Natural killer cell (primary cell): ENCODE measurements at regions of chr13 and their contacts with region 1.

Region 1: GRCh38 chr13:113879494-113880360 is 15.9 kb upstream of the GAS6 start:
- DNase-seq: no peak
- ATAC-seq: no peak
- H3K4me3 ChIP-seq: no peak overlapping the region
- H3K4me3 Mint-ChIP-seq: peak overlapping the region; percentile 19
- H3K27ac ChIP-seq: no peak overlapping the region
- H3K27ac Mint-ChIP-seq: no peak overlapping the region
- H3K4me1 ChIP-seq: peaks cover 46% of the 10 kb centered on the region
- H3K4me1 Mint-ChIP-seq: peaks cover 21 to 51% of the 10 kb centered on the region in 2 donors
- H3K27me3 ChIP-seq: no peaks in the 10 kb centered on the region
- H3K27me3 Mint-ChIP-seq: peaks cover 0 to under 1% of the 10 kb centered on the region in 2 donors
- CTCF ChIP-seq: no peak

Region 2: GRCh38 chr13:114259974-114260373 is 380.2 kb after region 1 on chr13:
- intact Hi-C with region 1: loop called (anchors 2 kb)
- DNase-seq: no peak
- ATAC-seq: no peak
- H3K4me3 ChIP-seq: no peak overlapping the region
- H3K4me3 Mint-ChIP-seq: no peak overlapping the region
- H3K27ac ChIP-seq: no peak overlapping the region
- H3K27ac Mint-ChIP-seq: peak overlapping the region in 1 of 2 donors; percentile 37
- H3K4me1 ChIP-seq: peaks cover 43% of the 10 kb centered on the region
- H3K4me1 Mint-ChIP-seq: peaks cover 54 to 63% of the 10 kb centered on the region in 2 donors
- H3K27me3 ChIP-seq: no peaks in the 10 kb centered on the region
- H3K27me3 Mint-ChIP-seq: no peaks in the 10 kb centered on the region
- CTCF ChIP-seq: no peak